GM12878 (cell line): ENCODE measurements at regions of chr11 and their contacts with region 1.

Region 1: DNA sequence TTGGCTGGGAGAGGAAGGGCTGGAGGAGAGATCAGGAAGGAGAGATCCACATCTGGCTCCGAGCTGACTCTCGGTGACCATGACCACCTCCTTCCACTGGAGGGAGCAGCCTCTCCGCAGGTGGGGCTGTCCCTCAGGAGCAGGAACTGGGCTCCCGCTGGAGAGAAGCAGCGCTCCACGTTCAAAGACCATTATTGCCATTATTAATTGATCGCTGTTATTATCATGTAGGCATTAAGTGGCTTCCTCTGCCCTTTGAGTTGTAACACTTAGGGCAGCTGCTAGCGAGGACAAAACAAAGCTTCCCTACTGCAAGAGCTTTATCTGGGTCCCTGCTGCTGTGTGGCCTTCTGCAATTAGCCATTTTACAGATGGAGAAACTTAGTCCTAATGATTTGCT is 251.9 kb downstream of the ST3GAL4 start:
- DNase-seq: no peak
- ATAC-seq: peak; percentile 93
- H3K4me3 ChIP-seq: no peak overlapping the region
- H3K27ac ChIP-seq: no peak overlapping the region
- H3K4me1 ChIP-seq: no peaks in the 10 kb centered on the region
- H3K27me3 ChIP-seq: peaks cover 2% of the 10 kb centered on the region in 2 experiments; a peak in 2 of 4 replicates
- CTCF ChIP-seq: peak; percentile 50 to 77 (median 74); a peak in 5 of 6 replicates
- EP300 ChIP-seq: no peak
- POLR2A ChIP-seq: no peak
- RAD21 ChIP-seq: peak; percentile 51

Region 2: DNA sequence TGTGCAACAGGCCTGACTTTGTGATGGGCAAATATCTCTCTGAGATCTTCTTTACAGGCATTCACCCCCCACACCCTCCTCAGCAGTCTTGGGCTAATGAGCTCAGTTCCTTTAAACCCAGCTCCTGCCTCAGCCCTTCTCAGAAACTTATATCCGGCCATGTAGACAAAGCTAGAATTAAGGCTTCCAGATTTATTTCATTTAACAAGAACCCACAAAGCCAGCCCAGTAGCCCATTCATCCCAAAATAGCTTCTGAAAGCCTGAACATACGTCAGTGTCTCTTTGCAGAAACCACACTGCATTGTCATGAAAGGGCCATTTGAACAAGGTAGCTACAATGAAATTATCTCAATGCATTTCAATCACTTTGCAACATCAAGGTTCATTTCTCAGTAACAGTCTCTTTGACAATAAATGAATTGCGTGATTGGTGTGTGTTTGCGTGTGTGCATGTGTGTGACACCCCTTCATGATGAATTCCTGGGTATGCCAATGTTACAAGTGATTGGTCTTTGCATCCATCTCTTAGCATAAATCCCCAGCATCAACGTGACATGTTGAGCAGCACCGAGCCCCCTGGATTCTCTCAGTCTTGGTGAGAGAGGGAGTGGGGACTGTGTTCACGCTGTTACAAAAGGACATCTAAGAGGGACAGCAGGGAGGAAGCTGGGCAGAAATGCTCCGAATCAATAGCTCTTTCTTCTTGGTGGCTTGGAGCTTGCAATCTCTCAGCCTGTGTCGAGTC is 93.6 kb after region 1 on chr11:
- CTCF ChIA-PET with region 1: interaction called, 3 read pairs
- POLR2A ChIA-PET with region 1: no interaction called
- RAD21 ChIA-PET with region 1: no interaction called
- SMC1A ChIA-PET with region 1: no interaction called
- in situ Hi-C with region 1: no loop called
- intact Hi-C with region 1: loop called (anchors 5 kb)
- DNase-seq: peak; percentile 42
- ATAC-seq: peak; percentile 88
- H3K4me3 ChIP-seq: no peak overlapping the region
- H3K27ac ChIP-seq: no peak overlapping the region; the same call in 1 of the 2 replicates
- H3K4me1 ChIP-seq: peaks cover 16% of the 10 kb centered on the region
- H3K27me3 ChIP-seq: no peaks in the 10 kb centered on the region; a peak in 1 of 4 replicates
- CTCF ChIP-seq: no peak
- EP300 ChIP-seq: peak; percentile 94 to 96; a peak in 3 of 4 replicates
- POLR2A ChIP-seq: no peak
- RAD21 ChIP-seq: no peak

Region 3: DNA sequence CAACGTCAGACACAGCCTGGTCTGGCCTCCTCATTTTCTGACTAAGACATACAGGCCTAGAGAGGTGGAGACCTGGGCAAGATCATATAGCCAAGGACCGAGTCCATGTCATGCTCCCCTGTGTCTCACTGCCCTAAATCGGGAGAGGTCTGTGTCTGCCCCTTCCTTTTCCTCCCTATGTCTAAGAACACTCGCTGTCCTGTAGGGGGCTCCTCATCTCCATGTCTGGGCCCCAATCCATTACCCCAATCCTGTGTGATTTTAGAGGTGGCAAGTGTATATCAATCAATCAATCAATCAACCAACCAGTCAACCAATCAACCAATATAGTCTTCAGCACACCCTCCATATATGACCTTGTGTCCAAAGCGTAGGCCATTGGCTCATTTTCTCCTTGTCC is 267.5 kb after region 1 on chr11:
- CTCF ChIA-PET with region 1: no interaction called
- POLR2A ChIA-PET with region 1: no interaction called
- RAD21 ChIA-PET with region 1: no interaction called
- SMC1A ChIA-PET with region 1: no interaction called
- in situ Hi-C with region 1: no loop called
- intact Hi-C with region 1: loop called (anchors 10 kb)
- DNase-seq: no peak
- ATAC-seq: peak; percentile 56
- H3K4me3 ChIP-seq: no peak overlapping the region
- H3K27ac ChIP-seq: no peak overlapping the region
- H3K4me1 ChIP-seq: no peaks in the 10 kb centered on the region
- H3K27me3 ChIP-seq: no peaks in the 10 kb centered on the region; a peak in 2 of 4 replicates
- CTCF ChIP-seq: peak; percentile 21 to 35 (median 32); a peak in 2 of 6 replicates
- EP300 ChIP-seq: no peak
- POLR2A ChIP-seq: no peak
- RAD21 ChIP-seq: 0 out of 2 replicates have a peak, but pooled peaks have one; percentile 20

Region 4: GRCh38 chr11:126989942-126990715 is 382.8 kb after region 1 on chr11:
- CTCF ChIA-PET with region 1: interaction called, 4 read pairs
- POLR2A ChIA-PET with region 1: no interaction called
- RAD21 ChIA-PET with region 1: interaction called, 5 read pairs
- SMC1A ChIA-PET with region 1: interaction called, 5 read pairs
- in situ Hi-C with region 1: no loop called
- intact Hi-C with region 1: loop called (anchors 2 kb)
- DNase-seq: no peak
- ATAC-seq: peak; percentile 98
- H3K4me3 ChIP-seq: no peak overlapping the region
- H3K27ac ChIP-seq: no peak overlapping the region
- H3K4me1 ChIP-seq: no peaks in the 10 kb centered on the region
- H3K27me3 ChIP-seq: peaks cover 0 to 12% of the 10 kb centered on the region in 2 experiments; a peak in 3 of 4 replicates
- CTCF ChIP-seq: peak; percentile 94 to 98 (median 94)
- EP300 ChIP-seq: no peak
- POLR2A ChIP-seq: no peak
- RAD21 ChIP-seq: peak; percentile 90

Region 5: DNA sequence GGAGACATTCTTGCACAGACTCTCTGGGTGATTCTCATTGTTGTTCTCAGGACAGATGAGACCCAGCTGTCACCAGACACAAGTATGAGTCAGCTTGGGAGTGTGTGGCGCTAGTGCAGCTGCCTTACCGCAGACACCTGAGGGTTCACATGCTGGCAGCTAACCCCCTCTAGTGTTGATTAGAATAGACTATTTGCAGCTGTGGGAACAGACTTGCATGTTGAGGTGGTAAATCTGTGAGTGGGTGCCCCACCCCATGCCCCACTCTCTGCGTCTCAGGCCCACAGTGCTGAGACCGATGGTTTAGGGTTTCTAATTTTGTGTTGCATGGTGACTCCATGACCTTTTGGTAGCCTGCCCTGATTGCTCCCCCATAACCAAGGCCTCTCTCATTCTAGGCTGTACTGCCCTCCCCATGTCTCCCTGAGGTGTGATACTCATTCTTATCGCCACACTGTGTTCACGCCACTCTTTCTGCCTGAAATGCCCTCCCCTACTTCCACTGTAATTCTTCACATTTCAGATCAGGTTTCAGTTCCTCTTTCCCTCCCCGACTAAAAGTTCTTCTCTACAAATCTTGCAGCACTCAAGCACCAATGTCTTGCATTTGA is 466.9 kb after region 1 on chr11:
- CTCF ChIA-PET with region 1: interaction called, 13 read pairs
- POLR2A ChIA-PET with region 1: no interaction called
- RAD21 ChIA-PET with region 1: interaction called, 3 read pairs
- SMC1A ChIA-PET with region 1: interaction called, 4 read pairs
- in situ Hi-C with region 1: no loop called
- intact Hi-C with region 1: loop called (anchors 1 kb)
- DNase-seq: peak; percentile 76
- ATAC-seq: peak; percentile 97
- H3K4me3 ChIP-seq: no peak overlapping the region
- H3K27ac ChIP-seq: no peak overlapping the region
- H3K4me1 ChIP-seq: peaks cover 12% of the 10 kb centered on the region
- H3K27me3 ChIP-seq: no peaks in the 10 kb centered on the region; a peak in 2 of 4 replicates
- CTCF ChIP-seq: peak; percentile 60 to 82 (median 64)
- EP300 ChIP-seq: peak; percentile 64 to 65
- POLR2A ChIP-seq: no peak
- RAD21 ChIP-seq: peak; percentile 75

Region 6: DNA sequence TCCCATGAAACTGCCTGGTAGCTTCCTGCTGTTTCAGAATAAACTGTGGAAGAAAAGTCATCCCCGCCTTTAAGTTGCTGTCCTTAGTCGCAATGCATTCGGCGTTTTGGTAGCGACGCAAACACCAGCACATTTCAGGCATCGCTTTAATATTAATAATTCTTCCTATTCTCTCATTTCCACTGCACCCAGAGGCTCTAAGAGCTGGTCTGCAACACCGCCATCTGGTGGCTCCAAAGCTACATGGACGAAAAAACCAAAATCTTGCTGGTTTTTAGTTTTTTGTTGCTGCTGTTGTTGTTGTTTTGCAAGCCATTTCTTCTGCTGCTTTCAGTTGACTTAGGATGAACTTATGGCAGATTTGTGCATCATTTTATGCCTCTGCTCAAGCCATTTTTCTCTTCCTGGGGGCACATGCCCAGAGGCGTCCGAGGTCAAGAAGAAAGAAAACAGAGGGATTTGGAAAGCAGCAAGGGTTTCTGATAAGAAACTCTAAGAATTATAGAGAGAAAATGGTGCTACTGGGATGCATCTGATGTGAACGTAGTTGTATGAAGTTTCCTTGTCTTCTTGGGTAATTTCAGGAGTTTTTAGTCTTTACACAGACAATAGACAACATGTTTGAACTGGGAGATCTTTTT is 738.6 kb after region 1 on chr11:
- CTCF ChIA-PET with region 1: no interaction called
- POLR2A ChIA-PET with region 1: no interaction called
- RAD21 ChIA-PET with region 1: no interaction called
- SMC1A ChIA-PET with region 1: no interaction called
- in situ Hi-C with region 1: no loop called
- intact Hi-C with region 1: loop called (anchors 10 kb)
- DNase-seq: no peak
- ATAC-seq: peak; percentile 52
- H3K4me3 ChIP-seq: no peak overlapping the region
- H3K27ac ChIP-seq: no peak overlapping the region
- H3K4me1 ChIP-seq: no peaks in the 10 kb centered on the region
- H3K27me3 ChIP-seq: no peaks in the 10 kb centered on the region; a peak in 1 of 4 replicates
- CTCF ChIP-seq: peak; percentile 67 to 76 (median 74)
- EP300 ChIP-seq: no peak
- POLR2A ChIP-seq: no peak
- RAD21 ChIP-seq: peak; percentile 57